ENCODE measurements at regions of chr5 and their contacts with region 1.

Region 1: GRCh38 chr5:176543428-176544173 is 5.5 kb upstream of the CDHR2 start:
- DNase-seq: peak; percentile 84
- H3K4me3 Mint-ChIP-seq: peak overlapping the region; percentile 91
- H3K27ac Mint-ChIP-seq: peak overlapping the region; percentile 83
- H3K4me1 Mint-ChIP-seq: peaks cover 69% of the 10 kb centered on the region
- H3K27me3 Mint-ChIP-seq: no peaks in the 10 kb centered on the region

Region 2: GRCh38 chr5:176388444-176389134 is 155.0 kb before region 1 on chr5 and contains the starts of genes HIGD2A and NOP16:
- CTCF ChIA-PET with region 1: no interaction called
- POLR2A ChIA-PET with region 1: interaction called, 21 read pairs
- DNase-seq: peak; percentile 99
- H3K4me3 Mint-ChIP-seq: peak within 1 kb of the TSS; percentile 95
- H3K27ac Mint-ChIP-seq: peak within 1 kb of the TSS; percentile 99
- H3K4me1 Mint-ChIP-seq: peaks cover 31% of the 10 kb centered on the region
- H3K27me3 Mint-ChIP-seq: no peaks in the 10 kb centered on the region
- total RNA-seq, gene HIGD2A: 142 to 147 TPM
- total RNA-seq, gene NOP16: 24.2 to 24.7 TPM

Region 3: DNA sequence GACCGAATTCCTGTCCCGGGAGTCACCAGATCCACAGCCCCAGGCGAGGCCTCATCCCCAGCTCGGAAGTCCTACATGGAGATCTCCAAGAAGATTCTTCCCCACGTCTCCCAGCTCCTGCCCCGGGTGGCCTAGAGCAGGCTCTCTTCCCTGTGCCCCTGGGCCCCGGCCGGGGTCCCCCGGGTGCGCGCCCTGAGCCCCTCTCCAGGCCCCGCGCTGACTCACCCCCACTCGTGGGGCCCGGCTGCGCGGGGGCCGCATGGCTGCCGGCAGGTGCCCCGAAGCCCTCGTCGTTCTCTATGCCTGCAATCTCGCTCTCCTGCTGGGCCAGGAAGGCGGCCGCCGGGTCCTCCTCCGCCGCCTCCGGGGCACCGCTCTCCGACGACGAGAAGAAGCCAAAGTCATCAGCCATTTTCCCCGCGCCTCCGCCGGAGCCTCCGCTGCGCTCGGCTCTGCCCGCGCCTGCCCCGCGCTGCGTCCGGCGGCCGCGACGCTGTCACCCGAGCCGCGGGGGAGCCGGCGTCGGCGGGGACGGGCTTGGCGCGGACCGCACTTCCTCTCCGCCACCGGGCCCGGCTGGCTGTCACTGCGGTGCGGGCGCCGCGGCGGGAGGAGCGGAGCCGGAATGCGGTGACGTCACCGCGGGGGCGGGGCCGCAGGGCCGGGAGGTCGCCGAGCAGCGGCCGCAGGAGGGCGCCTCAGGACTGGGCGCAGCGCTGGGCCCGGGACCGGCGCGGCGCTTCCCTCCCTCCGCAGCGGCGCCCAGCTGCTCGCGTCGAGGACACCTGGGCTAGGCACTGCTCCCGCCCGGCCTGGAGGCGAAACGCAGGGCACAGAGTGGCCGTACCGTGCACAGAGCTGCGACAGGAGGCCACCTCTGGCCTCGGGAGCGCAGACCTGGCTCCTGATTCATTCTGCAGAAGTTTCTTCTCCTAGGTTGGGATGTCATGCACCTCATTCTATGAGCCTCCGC is 127.4 kb before region 1 on chr5 and contains the start of gene CLTB:
- CTCF ChIA-PET with region 1: interaction called, 19 read pairs
- POLR2A ChIA-PET with region 1: interaction called, 26 read pairs
- DNase-seq: peak; percentile 91
- H3K4me3 Mint-ChIP-seq: peak within 1 kb of the TSS; percentile 82
- H3K27ac Mint-ChIP-seq: peak within 1 kb of the TSS; percentile 71
- H3K4me1 Mint-ChIP-seq: peaks cover 39% of the 10 kb centered on the region
- H3K27me3 Mint-ChIP-seq: peaks cover 10% of the 10 kb centered on the region
- total RNA-seq, gene CLTB: 56.2 to 57.2 TPM

Region 4: DNA sequence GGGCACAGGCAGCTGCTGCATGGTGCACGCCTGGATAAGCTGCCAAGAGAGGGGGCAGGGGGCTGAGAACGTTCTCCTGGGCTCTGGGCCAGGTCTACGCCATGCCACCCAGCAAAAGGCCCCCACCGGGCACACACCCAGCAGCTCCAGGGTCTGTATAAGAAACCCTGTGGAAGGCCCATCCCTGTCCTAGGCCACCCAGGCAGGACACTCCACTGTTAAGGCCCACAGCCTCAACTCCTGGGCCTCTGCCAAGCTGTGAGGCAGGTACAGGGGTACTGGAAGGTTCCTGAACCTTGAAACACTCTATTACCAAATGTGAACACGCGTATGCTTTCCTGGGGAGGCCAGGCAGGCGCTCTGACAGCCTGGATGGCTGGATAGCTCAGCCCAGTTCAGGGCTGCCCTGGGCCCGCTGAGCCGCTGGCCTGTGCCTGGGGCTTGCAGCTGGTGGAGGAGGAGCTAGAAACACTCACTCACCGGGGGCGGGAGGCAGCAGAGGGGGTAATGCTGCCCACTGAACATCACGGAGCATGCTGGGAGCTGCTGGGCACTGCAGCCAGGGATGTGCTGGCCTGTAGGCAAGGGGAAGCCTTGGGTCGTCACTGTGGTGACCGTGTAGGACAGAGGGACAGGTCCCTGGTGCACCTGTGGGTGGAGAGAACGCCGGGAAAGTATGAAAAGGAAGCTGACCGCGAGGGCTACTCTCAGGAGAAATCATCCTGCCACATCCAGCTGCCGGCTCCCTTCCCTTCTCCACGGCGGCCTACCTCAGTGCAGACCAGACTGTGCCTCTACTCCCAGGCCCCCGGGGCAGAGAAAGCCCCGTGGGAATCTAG is 12.4 kb before region 1 on chr5:
- CTCF ChIA-PET with region 1: interaction called, 24 read pairs
- POLR2A ChIA-PET with region 1: interaction called, 145 read pairs
- DNase-seq: no peak
- H3K4me3 Mint-ChIP-seq: peak overlapping the region; percentile 84
- H3K27ac Mint-ChIP-seq: peak overlapping the region; percentile 93
- H3K4me1 Mint-ChIP-seq: peaks cover 59% of the 10 kb centered on the region
- H3K27me3 Mint-ChIP-seq: no peaks in the 10 kb centered on the region

Region 5: DNA sequence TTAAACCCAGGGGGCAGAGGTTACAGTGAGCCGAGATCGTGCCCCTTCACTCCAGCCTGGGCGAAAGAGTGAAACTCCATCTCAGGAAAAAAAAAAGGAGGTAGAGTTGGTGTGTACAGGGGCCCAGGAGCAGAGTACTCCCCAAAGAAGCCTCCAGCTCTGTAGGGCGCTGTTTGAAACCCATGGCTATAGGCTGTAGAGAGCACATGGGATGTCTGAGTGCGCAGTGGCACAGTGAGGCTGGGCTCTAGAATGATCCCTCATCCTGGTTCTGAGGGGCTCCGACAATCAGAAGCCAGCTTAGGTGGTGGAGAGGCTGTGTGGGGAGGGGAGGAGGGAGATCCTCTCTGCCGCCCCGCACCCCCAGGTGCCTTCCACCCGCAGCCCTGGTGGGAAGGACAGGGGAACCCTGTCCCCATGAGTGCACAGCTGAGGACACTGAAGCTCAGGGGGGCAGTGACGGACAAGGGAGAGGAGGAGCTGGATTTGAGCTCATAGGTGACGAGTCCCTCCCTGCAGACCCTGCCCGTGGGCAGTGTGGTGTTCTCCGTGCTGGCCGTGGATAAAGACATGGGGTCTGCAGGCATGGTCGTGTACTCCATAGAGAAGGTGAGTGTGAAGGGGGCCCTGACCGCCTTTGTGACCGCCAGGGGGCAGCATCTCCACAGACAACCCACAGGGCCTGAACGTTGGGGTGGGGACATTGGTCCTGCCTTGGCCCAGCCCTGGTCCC is 30.1 kb after region 1 on chr5:
- CTCF ChIA-PET with region 1: interaction called, 10 read pairs
- POLR2A ChIA-PET with region 1: interaction called, 4 read pairs
- DNase-seq: peak; percentile 77
- H3K4me3 Mint-ChIP-seq: no peak overlapping the region
- H3K27ac Mint-ChIP-seq: no peak overlapping the region
- H3K4me1 Mint-ChIP-seq: peaks cover 3% of the 10 kb centered on the region
- H3K27me3 Mint-ChIP-seq: peaks cover 6% of the 10 kb centered on the region

Region 6: DNA sequence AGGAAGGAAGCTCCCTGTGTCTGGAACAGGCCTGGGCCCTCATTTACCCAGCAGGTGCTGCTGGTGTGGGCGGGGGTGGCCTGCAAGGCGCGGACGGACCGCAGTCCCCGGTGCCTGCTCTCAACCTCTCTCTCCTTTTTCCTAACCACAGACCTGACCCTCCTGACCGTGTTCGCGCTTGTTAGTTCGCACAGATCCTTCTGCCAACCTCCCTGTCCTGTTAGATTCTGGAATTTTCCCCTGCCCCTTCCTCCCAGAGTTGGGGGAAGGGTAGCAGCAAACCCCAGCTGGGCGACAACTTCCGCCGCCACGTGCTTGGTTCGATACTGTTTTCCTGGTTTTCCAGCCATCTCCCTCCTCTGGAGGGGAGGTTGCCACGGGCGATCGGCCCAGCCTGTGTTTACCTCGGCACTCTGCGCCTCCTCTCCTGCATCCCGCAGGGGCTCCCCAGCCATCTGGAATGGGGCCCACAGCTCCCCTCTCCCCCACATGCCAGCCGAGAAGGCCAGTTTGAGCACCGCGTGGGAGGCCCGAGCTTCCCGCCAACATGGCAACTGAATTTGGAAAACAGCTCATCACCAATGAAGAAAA is 196.0 kb after region 1 on chr5:
- CTCF ChIA-PET with region 1: no interaction called
- POLR2A ChIA-PET with region 1: no interaction called
- DNase-seq: no peak
- H3K4me3 Mint-ChIP-seq: no peak overlapping the region
- H3K27ac Mint-ChIP-seq: no peak overlapping the region
- H3K4me1 Mint-ChIP-seq: peaks cover 4% of the 10 kb centered on the region
- H3K27me3 Mint-ChIP-seq: peaks cover 57% of the 10 kb centered on the region

Measured in activated CD4-positive, alpha-beta memory T cell treated with anti-CD3 and anti-CD28 coated beads, Interleukin-2, amount 10 ng/mL, durations not matched to agents 7 days and 5 days (primary cell).